Activated CD4-positive, alpha-beta T cell treated with anti-CD3 and anti-CD28 coated beads for 36 hours (primary cell): ENCODE measurements at regions of chr11 and their contacts with region 1.

Region 1: GRCh38 chr11:34916015-34916842 is at the starts of genes APIP and PDHX:
- DNase-seq: peak; percentile 100
- ATAC-seq: peak; percentile 95
- H3K4me3 Mint-ChIP-seq: peak within 1 kb of the TSS; percentile 91
- H3K27ac Mint-ChIP-seq: peak within 1 kb of the TSS; percentile 95
- H3K4me1 Mint-ChIP-seq: peaks cover 40% of the 10 kb centered on the region
- H3K27me3 Mint-ChIP-seq: no peaks in the 10 kb centered on the region
- total RNA-seq, gene APIP: 43.6 to 43.7 TPM
- total RNA-seq, gene PDHX: 29.8 to 46.2 TPM

Region 2: GRCh38 chr11:34243726-34244464 is 672.3 kb before region 1 on chr11:
- CTCF ChIA-PET with region 1: no interaction called
- POLR2A ChIA-PET with region 1: no interaction called
- intact Hi-C with region 1: loop called in 1 of 2 experiments (anchors 10 kb)
- DNase-seq: peak; percentile 79
- ATAC-seq: peak; percentile 65
- H3K4me3 Mint-ChIP-seq: no peak overlapping the region
- H3K27ac Mint-ChIP-seq: no peak overlapping the region
- H3K4me1 Mint-ChIP-seq: peaks cover 88% of the 10 kb centered on the region
- H3K27me3 Mint-ChIP-seq: peaks cover 2% of the 10 kb centered on the region

Region 3: DNA sequence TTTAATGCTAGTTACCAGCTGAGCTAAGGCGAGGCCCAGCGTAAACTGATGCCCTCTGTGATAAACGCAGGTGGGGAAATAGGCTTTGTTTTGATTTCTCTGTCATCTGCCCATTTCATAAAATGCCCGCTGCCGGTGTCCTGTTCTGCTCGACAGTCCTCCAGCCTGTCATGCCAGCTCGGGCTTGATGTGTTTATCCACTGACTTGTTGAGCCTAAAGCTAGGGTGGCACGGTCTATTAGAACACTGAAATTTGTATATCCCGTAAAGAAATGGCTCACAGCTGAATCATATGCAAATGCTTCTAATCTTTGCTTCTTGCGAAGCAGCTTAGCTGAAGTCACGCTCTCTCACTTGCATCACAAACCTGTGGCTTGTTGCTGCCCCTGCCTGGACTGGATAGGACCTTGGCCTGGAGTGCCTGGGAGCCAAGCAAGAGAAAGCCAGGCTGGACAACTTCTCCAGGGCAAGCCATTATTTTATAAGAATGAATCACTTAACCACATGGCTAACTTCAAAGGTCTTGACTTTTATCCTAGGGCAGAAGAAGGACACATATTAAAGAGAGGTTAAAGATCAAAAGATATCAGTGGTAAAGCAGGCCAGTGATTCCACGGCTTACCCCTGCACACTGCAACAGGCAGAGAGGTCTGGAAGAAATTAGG is 262.3 kb before region 1 on chr11:
- CTCF ChIA-PET with region 1: no interaction called
- POLR2A ChIA-PET with region 1: no interaction called
- intact Hi-C with region 1: loop called in 1 of 2 experiments (anchors 5 kb)
- DNase-seq: peak; percentile 46
- ATAC-seq: peak; percentile 39
- H3K4me3 Mint-ChIP-seq: no peak overlapping the region
- H3K27ac Mint-ChIP-seq: peak overlapping the region; percentile 13
- H3K4me1 Mint-ChIP-seq: peaks cover 55% of the 10 kb centered on the region
- H3K27me3 Mint-ChIP-seq: peaks cover 34% of the 10 kb centered on the region

Region 4: DNA sequence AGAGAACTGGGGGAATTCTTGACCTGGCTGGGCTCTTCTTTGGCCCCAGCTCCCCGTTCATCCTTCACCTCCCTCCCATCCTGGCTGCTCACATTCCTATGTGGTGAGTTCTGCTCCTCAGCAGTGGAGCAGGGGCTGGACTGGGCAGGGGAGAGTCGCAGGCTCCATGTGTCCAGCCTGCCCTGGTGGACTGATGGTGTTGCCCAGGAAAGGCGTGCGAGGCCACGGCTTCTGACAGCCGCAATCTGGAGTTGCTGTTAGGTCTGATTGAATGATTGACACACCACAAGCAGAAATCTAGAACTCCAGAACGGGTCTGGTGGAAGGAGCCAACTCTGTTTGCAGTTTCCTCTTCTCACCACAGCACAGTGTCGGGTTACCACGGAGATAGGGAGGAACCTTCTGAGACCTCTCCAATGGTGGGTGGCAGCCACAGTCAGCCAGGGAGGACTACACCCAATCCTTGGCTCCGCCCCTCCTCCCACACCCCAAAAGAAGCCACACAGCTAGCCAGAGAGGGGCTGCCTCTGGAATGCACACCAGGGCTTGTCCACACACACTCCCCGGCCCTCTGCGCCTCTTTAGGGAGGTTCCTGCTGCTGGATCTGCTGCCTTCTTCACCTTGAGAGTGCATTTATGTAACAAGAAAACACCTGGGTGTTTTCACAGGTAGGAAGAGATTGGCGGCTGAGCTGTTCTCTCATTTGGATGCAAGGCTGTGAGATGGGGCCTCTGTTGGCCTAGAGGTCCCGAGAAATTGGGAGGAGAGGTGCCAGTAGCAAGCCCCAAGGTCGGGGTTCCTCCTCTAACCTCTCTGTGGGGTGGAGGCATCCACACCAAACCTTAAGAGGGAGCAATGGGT is 166.3 kb after region 1 on chr11:
- CTCF ChIA-PET with region 1: no interaction called
- POLR2A ChIA-PET with region 1: no interaction called
- intact Hi-C with region 1: loop called in 1 of 2 experiments (anchors 5 kb)
- DNase-seq: peak; percentile 89
- ATAC-seq: peak; percentile 78
- H3K4me3 Mint-ChIP-seq: peak overlapping the region; percentile 30
- H3K27ac Mint-ChIP-seq: peak overlapping the region; percentile 85
- H3K4me1 Mint-ChIP-seq: peaks cover 93% of the 10 kb centered on the region
- H3K27me3 Mint-ChIP-seq: no peaks in the 10 kb centered on the region

Region 5: DNA sequence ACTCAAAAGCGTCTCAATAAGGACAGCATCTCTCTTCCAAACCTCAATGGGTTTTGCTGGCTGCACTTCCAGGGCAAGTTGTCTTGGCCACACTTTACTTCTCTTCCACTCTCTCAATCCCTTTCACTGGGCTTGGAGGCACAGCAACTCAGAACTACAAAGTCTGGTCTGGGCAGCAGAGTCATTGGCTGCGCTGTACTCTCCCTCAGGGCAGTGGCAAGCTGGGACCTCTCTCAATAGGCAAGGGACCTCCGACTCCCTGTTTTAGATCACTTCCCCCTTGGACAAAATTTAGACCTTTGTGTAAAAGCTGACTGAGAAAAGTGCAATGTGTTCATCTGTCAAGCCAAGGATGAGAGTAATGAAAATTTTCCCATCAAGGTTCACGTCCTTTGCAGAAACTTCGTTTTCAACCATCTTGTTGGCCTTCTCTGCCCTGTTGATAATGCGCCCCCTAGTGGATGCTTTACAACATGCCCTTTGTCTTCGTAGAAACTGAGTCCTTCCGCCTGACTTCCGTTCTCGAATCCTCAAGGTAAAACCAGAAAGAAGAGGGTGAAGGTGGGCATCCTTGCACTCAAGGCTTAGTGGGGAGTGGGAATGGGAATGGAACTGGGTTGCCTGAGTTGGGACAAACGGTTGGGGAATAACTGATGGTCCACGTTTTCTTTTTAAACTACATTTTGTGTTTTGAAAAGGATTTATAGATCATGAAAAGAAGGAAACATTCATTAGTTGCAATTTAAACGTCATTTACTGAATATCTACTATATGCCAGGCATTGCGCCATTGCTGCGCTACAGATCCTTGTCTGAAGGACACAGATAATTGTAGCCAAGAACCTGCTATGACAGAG is 321.9 kb after region 1 on chr11:
- CTCF ChIA-PET with region 1: interaction called, 3 read pairs
- POLR2A ChIA-PET with region 1: no interaction called
- intact Hi-C with region 1: loop called in 1 of 2 experiments (anchors 2 kb)
- DNase-seq: peak; percentile 78
- ATAC-seq: no peak
- H3K4me3 Mint-ChIP-seq: no peak overlapping the region
- H3K27ac Mint-ChIP-seq: peak overlapping the region; percentile 74
- H3K4me1 Mint-ChIP-seq: peaks cover 68% of the 10 kb centered on the region
- H3K27me3 Mint-ChIP-seq: no peaks in the 10 kb centered on the region

Region 6: DNA sequence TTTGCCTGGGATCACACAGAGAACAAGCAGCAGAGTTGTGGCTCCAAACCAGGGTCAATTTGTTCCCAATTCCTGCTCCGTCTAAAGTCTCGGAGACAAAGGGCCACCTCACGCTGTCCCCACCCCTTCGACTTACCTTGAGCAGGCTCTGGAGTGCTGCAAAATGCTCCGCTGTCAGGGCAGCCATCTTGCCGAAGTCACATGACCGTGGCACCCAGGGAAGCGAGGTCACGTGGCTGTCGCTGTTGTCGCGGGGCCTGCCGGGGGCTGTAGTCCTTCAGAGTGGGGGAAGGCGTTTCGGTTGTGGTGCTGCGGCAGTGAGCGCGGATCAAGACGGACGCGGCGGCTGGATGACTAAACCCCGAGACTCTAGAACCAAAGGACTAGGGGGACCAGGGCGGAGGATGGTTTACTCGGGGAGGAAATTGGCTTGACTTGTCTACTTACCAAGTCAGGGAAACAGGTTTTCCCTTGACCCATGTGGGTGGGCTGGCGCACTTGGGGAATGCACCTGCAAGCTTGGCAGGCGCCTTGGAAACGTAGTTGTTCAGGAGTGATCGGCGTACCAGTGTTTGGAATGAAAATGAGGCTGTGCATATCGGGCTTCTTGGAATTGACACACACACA is 1373.1 kb after region 1 on chr11 and contains the start of gene COMMD9:
- CTCF ChIA-PET with region 1: no interaction called
- POLR2A ChIA-PET with region 1: no interaction called
- intact Hi-C with region 1: loop called in 1 of 2 experiments (anchors 10 kb)
- DNase-seq: peak; percentile 98
- ATAC-seq: peak; percentile 99
- H3K4me3 Mint-ChIP-seq: peak within 1 kb of the TSS; percentile 83
- H3K27ac Mint-ChIP-seq: peak within 1 kb of the TSS; percentile 90
- H3K4me1 Mint-ChIP-seq: peaks cover 34% of the 10 kb centered on the region
- H3K27me3 Mint-ChIP-seq: no peaks in the 10 kb centered on the region
- total RNA-seq, gene COMMD9: 33.0 to 44.6 TPM